Endothelial cell of umbilical vein (primary cell): ENCODE measurements at regions of chr2 and their contacts with region 1.

Region 1: DNA sequence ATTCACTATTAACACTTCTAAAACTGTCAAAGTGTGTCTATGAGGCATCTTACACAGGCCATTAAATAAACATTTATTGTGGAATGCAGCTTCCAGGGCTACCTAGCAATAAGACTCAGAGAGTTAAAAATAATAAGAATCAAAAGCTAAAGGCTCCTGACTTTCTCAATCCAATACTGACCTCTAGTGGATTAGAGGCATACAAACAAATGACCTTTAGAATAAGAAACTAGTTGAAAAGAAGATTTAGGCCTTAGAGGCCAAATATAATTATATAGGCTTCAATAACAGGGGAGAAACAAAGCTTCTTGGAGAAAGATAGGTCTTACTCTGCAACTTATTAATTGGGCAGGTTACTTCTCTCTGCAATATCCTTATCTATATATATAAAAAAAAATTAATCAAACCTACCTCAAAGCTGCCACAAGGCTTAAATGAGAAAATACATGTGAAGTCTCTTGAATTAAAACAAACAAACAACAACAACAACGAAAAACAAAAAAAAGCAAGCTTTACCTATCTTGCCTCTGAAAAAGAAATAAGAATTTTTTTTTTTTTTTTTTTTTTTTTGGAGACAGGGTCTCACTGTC is 246.1 kb downstream of the EXOC6B start:
- DNase-seq: peak; percentile 69
- H3K4me3 ChIP-seq: no peak overlapping the region
- H3K27ac ChIP-seq: no peak overlapping the region
- H3K4me1 ChIP-seq: no peaks in the 10 kb centered on the region
- H3K27me3 ChIP-seq: no peaks in the 10 kb centered on the region
- CTCF ChIP-seq: peak; percentile 36 to 44
- POLR2A ChIP-seq: no peak

Region 2: GRCh38 chr2:71545572-71546274 is 1034.0 kb before region 1 on chr2:
- CTCF ChIA-PET with region 1: interaction called, 3 read pairs
- POLR2A ChIA-PET with region 1: no interaction called
- dilution Hi-C with region 1: no loop called
- intact Hi-C with region 1: loop called (anchors 5 kb)
- DNase-seq: peak; percentile 74
- H3K4me3 ChIP-seq: peak overlapping the region in 1 of 3 experiments; percentile 7
- H3K27ac ChIP-seq: no peak overlapping the region
- H3K4me1 ChIP-seq: peaks cover 11% of the 10 kb centered on the region
- H3K27me3 ChIP-seq: no peaks in the 10 kb centered on the region
- CTCF ChIP-seq: peak; percentile 64 to 72
- POLR2A ChIP-seq: no peak

Region 3: GRCh38 chr2:72150157-72150865 is 429.4 kb before region 1 on chr2:
- CTCF ChIA-PET with region 1: interaction called, 106 read pairs
- POLR2A ChIA-PET with region 1: no interaction called
- dilution Hi-C with region 1: no loop called
- intact Hi-C with region 1: loop called (anchors 1 kb)
- DNase-seq: peak; percentile 77
- H3K4me3 ChIP-seq: no peak overlapping the region
- H3K27ac ChIP-seq: no peak overlapping the region
- H3K4me1 ChIP-seq: peaks cover 15% of the 10 kb centered on the region
- H3K27me3 ChIP-seq: peaks cover 33 to 48% of the 10 kb centered on the region in 2 experiments
- CTCF ChIP-seq: peak; percentile 66 to 85
- POLR2A ChIP-seq: no peak

Region 4: GRCh38 chr2:72198532-72199241 is 381.0 kb before region 1 on chr2:
- CTCF ChIA-PET with region 1: interaction called, 14 read pairs
- POLR2A ChIA-PET with region 1: no interaction called
- dilution Hi-C with region 1: no loop called
- intact Hi-C with region 1: no loop called
- DNase-seq: peak; percentile 49
- H3K4me3 ChIP-seq: no peak overlapping the region
- H3K27ac ChIP-seq: no peak overlapping the region
- H3K4me1 ChIP-seq: no peaks in the 10 kb centered on the region
- H3K27me3 ChIP-seq: no peaks in the 10 kb centered on the region
- CTCF ChIP-seq: no peak
- POLR2A ChIP-seq: no peak

Region 5: DNA sequence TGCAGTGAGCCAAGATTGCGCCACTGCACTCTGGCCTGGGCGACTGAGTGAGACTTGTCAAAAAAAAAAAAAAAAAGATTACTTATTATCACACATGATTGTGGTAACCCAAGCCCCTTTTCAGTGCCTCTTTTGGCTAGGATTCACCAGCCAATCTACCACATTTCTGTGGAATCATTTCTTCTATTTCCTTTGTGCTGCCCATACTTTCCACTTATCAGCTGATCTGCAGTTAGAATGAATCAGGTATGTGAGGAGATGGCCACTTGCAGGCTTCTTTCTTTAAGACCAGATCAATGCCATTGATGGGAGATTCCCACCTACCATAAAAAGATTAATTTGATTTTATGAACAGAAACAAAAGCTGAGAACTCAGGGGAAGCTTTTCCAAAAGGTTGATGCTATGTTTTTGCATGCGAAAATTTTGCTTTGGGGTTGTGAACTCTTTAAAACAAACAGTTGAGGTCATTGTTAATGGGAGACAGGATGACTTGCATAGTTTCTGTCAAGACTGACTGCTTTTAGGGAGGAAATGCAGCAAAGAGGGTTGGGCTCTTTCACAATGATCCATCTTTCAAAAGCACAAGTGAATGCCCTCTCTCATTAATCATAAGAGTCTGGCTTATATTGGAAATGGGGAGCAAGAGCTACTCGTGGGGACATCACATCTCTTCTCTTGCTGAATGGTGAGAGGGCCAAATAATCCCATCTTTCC is 365.1 kb before region 1 on chr2:
- CTCF ChIA-PET with region 1: no interaction called
- POLR2A ChIA-PET with region 1: no interaction called
- dilution Hi-C with region 1: no loop called
- intact Hi-C with region 1: no loop called
- DNase-seq: peak; percentile 70
- H3K4me3 ChIP-seq: no peak overlapping the region
- H3K27ac ChIP-seq: no peak overlapping the region
- H3K4me1 ChIP-seq: no peaks in the 10 kb centered on the region
- H3K27me3 ChIP-seq: no peaks in the 10 kb centered on the region
- CTCF ChIP-seq: no peak
- POLR2A ChIP-seq: no peak

Region 6: GRCh38 chr2:72561621-72562318 is 17.9 kb before region 1 on chr2:
- CTCF ChIA-PET with region 1: interaction called, 14 read pairs
- POLR2A ChIA-PET with region 1: no interaction called
- dilution Hi-C with region 1: no loop called
- intact Hi-C with region 1: no loop called
- DNase-seq: peak; percentile 78
- H3K4me3 ChIP-seq: peak overlapping the region in 1 of 3 experiments; percentile 35
- H3K27ac ChIP-seq: peak overlapping the region; percentile 92
- H3K4me1 ChIP-seq: peaks cover 35% of the 10 kb centered on the region
- H3K27me3 ChIP-seq: no peaks in the 10 kb centered on the region
- CTCF ChIP-seq: no peak
- POLR2A ChIP-seq: no peak

Region 7: DNA sequence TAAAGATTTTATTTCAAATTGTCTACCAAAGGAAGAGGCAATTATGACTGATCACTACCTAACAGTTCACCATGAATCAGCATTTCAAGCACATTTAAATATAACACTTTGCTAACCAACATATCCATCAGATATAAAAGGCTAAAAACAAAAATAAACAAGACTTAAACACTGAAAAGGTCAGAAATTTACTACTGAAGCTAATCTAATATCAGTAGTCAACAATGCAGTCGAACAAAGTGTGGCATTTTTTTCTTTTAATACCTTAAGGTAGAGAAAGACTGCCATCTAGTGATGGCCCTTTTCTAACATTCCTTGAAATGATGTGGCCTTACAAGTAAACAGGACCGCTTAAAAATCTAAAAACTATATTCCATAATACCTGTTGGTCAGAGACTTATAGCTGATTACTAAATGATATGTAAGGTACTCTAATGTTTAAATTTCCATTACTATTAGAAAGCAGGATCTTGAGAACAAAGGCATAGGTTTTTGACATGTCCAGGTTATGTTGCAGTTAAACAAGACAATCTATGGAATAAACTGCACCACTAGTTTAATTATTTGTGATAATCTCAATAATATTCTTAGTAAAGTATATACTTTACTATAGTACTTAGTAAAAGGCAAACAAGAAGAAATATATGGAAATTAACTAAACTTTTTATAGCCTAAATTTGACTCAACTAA is 166.1 kb after region 1 on chr2:
- CTCF ChIA-PET with region 1: interaction called, 13 read pairs
- POLR2A ChIA-PET with region 1: no interaction called
- dilution Hi-C with region 1: no loop called
- intact Hi-C with region 1: loop called (anchors 1 kb)
- DNase-seq: peak; percentile 88
- H3K4me3 ChIP-seq: no peak overlapping the region
- H3K27ac ChIP-seq: no peak overlapping the region
- H3K4me1 ChIP-seq: no peaks in the 10 kb centered on the region
- H3K27me3 ChIP-seq: no peaks in the 10 kb centered on the region
- CTCF ChIP-seq: peak; percentile 37 to 50
- POLR2A ChIP-seq: no peak